Mammary epithelial cell (primary cell): ENCODE measurements at regions of chr6 and their contacts with region 1.

Region 1: GRCh38 chr6:138428944-138429598 is 25.0 kb downstream of the HEBP2 start:
- DNase-seq: peak; percentile 24
- H3K4me3 ChIP-seq: no peak overlapping the region
- H3K27ac ChIP-seq: no peak overlapping the region
- H3K4me1 ChIP-seq: peaks cover 4% of the 10 kb centered on the region
- H3K27me3 ChIP-seq: no peaks in the 10 kb centered on the region
- CTCF ChIP-seq: peak; percentile 57 to 63

Region 2: DNA sequence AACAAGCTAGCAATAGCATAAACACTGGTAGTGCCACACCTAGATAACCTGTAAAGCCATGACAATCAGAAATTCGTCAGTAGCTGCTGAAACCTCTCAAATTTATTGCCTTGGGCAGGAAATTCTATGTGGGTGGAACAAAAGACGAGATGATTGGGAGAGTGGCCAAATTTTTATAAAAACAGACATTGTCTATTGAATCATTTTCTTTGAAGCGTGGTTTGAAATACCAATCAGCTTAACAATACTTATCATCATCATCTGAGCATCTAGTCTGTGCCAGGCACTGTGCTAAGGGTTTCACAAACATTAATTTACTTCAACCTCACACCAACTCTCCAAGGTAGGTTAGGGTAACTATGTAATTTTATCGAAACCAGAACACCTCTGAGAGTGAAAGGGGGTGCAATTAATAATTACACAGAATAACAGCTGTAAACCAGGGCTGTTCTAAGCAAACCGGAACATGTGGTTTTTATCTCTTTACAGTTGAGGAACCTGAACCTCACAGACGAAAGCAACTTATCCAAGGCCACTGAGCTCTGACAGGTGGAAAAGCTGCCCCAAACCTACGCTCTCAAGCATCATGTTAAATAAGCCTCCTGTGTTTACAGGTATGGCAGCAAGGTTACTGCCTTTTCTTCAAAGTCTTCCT is 26.8 kb after region 1 on chr6:
- CTCF ChIA-PET with region 1: interaction called, 4 read pairs
- dilution Hi-C with region 1: no loop called
- in situ Hi-C with region 1: no loop called
- intact Hi-C with region 1: loop called (anchors 1 kb)
- DNase-seq: peak; percentile 97
- H3K4me3 ChIP-seq: peak overlapping the region in 2 of 3 experiments; percentile 13 to 15
- H3K27ac ChIP-seq: peak overlapping the region; percentile 96
- H3K4me1 ChIP-seq: peaks cover 29% of the 10 kb centered on the region
- H3K27me3 ChIP-seq: no peaks in the 10 kb centered on the region
- CTCF ChIP-seq: no peak

Region 3: GRCh38 chr6:138509371-138509770 is 80.3 kb after region 1 on chr6:
- CTCF ChIA-PET with region 1: interaction called, 5 read pairs
- dilution Hi-C with region 1: loop called (anchors 5 kb)
- in situ Hi-C with region 1: loop called (anchors 5 kb)
- intact Hi-C with region 1: loop called (anchors 1 kb)
- DNase-seq: peak; percentile 47
- H3K4me3 ChIP-seq: no peak overlapping the region
- H3K27ac ChIP-seq: no peak overlapping the region
- H3K4me1 ChIP-seq: no peaks in the 10 kb centered on the region
- H3K27me3 ChIP-seq: no peaks in the 10 kb centered on the region
- CTCF ChIP-seq: peak; percentile 64 to 68

Region 4: DNA sequence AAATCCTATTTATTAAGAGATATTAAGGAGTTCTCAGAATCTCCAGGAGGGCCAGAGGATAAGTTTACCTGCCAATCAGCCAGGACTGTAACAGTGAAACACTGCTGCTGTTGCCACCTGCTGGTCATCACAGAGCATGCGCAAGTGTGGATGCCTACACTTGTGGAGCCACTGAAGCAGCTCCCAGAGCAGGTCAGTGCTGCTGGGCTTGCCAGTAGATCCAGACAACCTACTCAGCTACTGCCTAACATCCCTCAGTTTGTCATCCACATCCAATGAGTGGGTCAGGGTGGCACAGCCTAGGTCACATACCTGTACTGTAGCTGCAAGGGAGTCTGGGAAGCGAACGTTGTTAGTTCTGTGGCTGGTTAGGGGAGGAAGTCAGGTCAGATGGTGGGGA is 88.6 kb after region 1 on chr6:
- CTCF ChIA-PET with region 1: no interaction called
- dilution Hi-C with region 1: loop called (anchors 5 kb)
- in situ Hi-C with region 1: loop called in 1 of 2 experiments (anchors 5 kb)
- intact Hi-C with region 1: no loop called
- DNase-seq: peak; percentile 48
- H3K4me3 ChIP-seq: no peak overlapping the region
- H3K27ac ChIP-seq: no peak overlapping the region
- H3K4me1 ChIP-seq: peaks cover 8% of the 10 kb centered on the region
- H3K27me3 ChIP-seq: no peaks in the 10 kb centered on the region
- CTCF ChIP-seq: peak; percentile 87 to 95

Region 5: GRCh38 chr6:138765896-138766655 is 337.0 kb after region 1 on chr6:
- CTCF ChIA-PET with region 1: no interaction called
- dilution Hi-C with region 1: no loop called
- in situ Hi-C with region 1: loop called (anchors 25 kb)
- intact Hi-C with region 1: loop called (anchors 2 kb)
- DNase-seq: peak; percentile 20
- H3K4me3 ChIP-seq: no peak overlapping the region
- H3K27ac ChIP-seq: no peak overlapping the region
- H3K4me1 ChIP-seq: no peaks in the 10 kb centered on the region
- H3K27me3 ChIP-seq: no peaks in the 10 kb centered on the region
- CTCF ChIP-seq: peak; percentile 54 to 64

Region 6: DNA sequence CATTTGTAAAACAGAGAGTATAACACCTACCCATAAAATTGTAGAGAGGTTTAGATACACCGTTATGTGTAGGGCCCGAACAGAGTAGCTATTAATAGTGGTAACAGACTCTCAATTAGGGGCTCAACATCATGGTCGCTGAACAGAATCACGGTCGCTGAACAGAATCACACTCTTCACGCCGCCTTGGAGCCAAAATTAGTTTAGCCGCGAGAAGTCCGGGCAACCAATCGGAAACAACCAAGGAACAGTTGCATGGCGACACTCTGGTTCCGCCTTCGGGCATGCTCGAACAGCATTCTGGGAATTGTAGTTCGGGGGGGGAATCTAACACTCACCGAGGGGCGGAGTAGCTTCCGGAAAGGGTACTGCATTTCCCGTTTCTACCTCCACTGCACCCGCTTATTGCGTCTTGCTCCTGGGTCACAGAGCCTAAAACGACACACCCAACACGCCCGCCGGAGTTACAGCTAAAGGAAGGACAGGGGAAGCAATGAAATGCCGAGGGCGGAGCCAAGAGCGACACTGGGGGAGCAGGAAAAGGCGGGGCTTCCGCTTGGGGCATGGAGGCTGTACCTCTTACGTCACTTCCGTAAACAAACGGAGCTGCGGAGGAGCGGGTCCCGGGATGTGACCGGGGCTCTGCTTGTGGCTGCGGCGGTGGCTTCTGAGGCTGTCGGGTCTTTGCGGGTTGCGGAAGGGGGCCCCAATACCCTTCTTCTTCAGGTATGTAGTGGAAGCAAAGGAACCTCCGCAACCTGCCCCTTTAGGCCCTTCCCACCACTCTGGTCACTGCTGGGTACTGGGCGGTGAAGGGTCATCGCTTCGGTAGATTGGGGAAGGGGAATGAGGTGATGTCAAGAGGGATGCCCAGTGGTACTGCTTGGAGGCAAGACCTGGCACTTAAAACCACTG is 344.4 kb after region 1 on chr6 and contains the start of gene CCDC28A:
- CTCF ChIA-PET with region 1: no interaction called
- dilution Hi-C with region 1: no loop called
- in situ Hi-C with region 1: loop called (anchors 25 kb)
- intact Hi-C with region 1: no loop called
- DNase-seq: peak; percentile 95
- H3K4me3 ChIP-seq: peak within 1 kb of the TSS; percentile 94 to 96 (median 95)
- H3K27ac ChIP-seq: peak within 1 kb of the TSS; percentile 81
- H3K4me1 ChIP-seq: peaks cover 14% of the 10 kb centered on the region
- H3K27me3 ChIP-seq: no peaks in the 10 kb centered on the region
- CTCF ChIP-seq: no peak
- total RNA-seq, gene CCDC28A: 7.3 to 10.3 TPM

Region 7: DNA sequence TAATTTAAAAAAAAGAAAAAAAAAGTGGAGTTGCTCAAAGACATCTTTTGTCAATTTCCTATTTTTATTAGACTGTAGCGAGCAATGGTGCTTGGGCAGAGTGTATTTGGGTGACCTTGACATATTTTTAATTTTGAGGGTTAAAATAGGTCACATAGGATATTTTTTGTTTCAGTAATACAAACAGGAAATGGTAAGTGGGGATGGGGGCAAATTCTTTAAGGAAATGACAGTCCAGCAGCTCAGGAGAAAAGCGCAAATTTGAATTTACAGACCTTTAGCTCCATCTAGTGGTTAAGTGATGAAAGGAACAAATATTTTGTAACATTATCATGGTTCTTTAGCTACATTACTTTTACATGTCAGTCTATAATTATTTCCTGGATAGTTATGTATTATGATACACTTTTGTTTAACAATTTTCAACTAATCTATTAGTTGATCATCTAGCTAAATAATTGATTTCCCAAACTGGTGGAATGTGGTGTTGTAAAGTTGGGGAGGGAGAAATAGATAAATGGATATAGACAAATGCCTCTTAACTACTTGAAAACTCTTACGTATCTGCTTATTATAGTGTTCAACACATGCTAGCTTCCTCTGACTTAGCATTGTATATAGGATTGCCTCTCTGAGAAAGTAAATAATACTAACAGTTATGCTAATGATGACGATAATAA is 935.4 kb after region 1 on chr6:
- CTCF ChIA-PET with region 1: no interaction called
- dilution Hi-C with region 1: no loop called
- in situ Hi-C with region 1: no loop called
- intact Hi-C with region 1: loop called (anchors 5 kb)
- DNase-seq: peak; percentile 27
- H3K4me3 ChIP-seq: no peak overlapping the region
- H3K27ac ChIP-seq: no peak overlapping the region
- H3K4me1 ChIP-seq: peaks cover 9% of the 10 kb centered on the region
- H3K27me3 ChIP-seq: no peaks in the 10 kb centered on the region
- CTCF ChIP-seq: peak; percentile 41 to 53